ENCODE measurements at regions of chr20 and their contacts with region 1.

Region 1: GRCh38 chr20:32652739-32653526 is 20.8 kb downstream of the C20orf203 start:
- H3K4me3 ChIP-seq: no peak overlapping the region
- H3K27ac ChIP-seq: no peak overlapping the region
- H3K4me1 ChIP-seq: no peaks in the 10 kb centered on the region
- CTCF ChIP-seq: peak; percentile 89

Region 2: DNA sequence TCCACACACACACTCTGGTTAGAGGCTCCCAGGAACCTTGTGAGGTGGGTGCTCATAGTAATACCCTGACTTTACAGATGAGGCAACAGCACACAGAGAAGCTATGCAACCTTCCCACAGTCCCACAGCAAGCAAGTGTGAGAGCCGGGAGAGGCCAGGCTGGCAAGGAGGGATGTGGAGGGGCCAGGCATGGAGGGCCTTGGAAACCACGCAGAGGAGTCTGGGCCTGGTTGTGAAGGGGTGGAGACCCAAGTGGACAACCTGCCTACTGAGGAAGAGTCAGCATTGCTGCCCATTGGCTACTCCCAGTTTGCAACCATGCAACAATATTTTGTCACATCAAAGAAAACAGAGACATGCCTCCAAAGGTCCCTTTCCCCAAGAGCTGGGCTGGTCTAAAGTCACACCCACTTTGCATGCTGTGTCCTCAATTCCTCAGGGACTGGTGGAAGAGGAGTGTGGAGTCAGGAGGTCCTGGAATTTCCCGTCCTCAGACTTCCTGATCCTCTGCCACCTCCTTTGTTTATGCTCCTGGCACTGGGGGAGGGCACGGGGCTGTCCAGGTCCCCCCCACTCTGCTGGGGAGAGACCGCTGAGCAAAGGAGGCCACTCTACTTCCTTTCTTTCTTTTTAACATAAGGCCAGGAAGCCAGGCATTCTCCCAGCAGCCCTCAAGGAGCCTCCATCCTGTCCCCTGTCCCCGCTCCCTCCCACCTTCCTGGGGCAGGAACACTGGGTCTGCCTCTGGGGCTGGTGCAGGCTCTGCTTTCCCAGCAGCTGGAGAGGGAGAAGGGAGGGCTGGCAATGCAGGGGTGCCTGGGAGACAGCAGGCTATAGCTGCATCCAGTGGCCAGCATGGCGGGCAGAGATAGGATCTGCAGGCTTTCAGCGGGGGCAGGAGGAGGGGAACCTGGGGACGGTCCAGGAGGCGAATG is 136.1 kb before region 1 on chr20:
- CTCF ChIA-PET with region 1: interaction called, 204 read pairs
- POLR2A ChIA-PET with region 1: interaction called, 10 read pairs
- H3K4me3 ChIP-seq: no peak overlapping the region
- H3K27ac ChIP-seq: no peak overlapping the region
- H3K4me1 ChIP-seq: no peaks in the 10 kb centered on the region; the same call in 1 of the 2 replicates
- CTCF ChIP-seq: no peak

Region 3: GRCh38 chr20:32521780-32522525 is 131.0 kb before region 1 on chr20:
- CTCF ChIA-PET with region 1: interaction called, 204 read pairs
- POLR2A ChIA-PET with region 1: interaction called, 10 read pairs
- H3K4me3 ChIP-seq: no peak overlapping the region
- H3K27ac ChIP-seq: no peak overlapping the region
- H3K4me1 ChIP-seq: no peaks in the 10 kb centered on the region; the same call in 1 of the 2 replicates
- CTCF ChIP-seq: peak; percentile 90

Region 4: DNA sequence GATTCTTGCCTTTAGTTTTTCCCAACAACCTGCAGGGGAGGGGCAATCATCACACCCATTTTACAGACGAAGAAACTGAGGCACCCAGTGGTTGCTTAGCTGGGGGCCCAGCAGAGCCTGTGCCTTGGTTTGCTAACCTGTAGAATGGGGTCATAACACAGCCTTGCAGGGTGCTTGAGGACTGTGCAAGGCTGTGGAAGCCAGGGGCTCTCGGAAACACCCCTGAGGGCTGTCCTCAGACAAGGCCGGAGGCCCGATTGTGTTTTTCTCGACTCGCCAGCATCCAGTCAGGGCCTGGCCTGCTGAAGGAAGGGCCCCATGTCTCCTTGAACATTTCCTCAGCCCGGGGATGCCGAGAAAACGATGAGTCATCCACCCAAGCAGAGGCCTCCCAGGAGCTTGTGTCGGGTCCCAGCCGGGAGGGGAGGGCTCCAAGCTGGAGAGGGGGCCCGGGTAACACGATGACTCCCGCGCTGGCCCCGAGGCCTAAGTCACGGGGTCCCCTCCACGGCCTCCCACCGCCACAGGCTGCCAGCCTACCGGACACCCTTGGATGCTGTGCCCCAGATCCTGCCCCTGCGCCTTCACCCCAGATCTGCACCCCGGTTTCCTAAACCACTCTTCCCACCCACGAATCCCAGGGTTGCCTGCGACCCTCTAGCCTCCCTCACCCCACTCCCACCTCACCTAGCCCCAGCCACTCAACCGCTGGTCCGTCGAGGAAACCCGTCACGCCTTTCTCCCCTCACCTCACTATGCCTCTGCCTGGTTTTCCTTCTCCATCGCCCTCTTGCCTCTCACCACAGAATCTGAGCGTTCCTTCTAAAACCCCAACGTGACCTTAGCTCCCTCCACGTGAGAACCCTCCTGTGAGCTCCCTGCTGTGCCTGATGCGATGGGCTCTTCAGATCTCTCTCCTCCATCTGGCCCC is 78.4 kb before region 1 on chr20:
- CTCF ChIA-PET with region 1: interaction called, 10 read pairs
- POLR2A ChIA-PET with region 1: no interaction called
- H3K4me3 ChIP-seq: no peak overlapping the region
- H3K27ac ChIP-seq: no peak overlapping the region
- H3K4me1 ChIP-seq: no peaks in the 10 kb centered on the region; the same call in 1 of the 2 replicates
- CTCF ChIP-seq: no peak

Region 5: DNA sequence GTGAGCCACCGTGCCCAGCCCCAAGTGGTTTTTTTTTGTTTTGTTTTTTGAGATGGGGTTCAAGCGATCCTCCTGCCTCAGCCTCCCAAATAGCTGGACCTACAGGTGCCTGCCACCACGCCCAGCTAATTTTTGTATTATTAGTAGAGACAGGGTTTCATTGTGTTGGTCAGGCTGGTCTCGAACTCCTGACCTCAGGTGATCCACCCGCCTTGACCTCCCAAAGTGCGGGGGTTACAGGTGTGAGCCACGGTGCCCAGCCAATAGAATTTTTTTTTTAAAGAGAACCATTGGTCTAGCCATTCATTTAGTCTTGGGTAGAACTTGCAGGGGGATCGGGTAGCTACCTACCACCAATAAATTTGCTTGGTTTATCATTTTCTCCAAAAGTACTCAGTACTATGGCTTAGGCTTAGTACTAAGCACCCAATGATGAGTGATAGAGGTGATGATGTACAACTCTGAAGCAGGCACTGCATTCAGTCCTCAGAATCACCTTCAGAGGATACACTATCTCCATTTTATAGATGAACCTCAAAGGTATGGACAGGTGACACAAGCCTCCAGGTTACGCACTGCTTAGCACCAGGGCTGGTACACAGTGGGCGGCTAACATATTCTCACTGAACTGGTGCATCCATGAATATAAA is 33.7 kb after region 1 on chr20:
- CTCF ChIA-PET with region 1: no interaction called
- POLR2A ChIA-PET with region 1: no interaction called
- H3K4me3 ChIP-seq: no peak overlapping the region
- H3K27ac ChIP-seq: no peak overlapping the region
- H3K4me1 ChIP-seq: no peaks in the 10 kb centered on the region
- CTCF ChIP-seq: no peak

Measured in HEK293 (cell line).